GM10248 (cell line): ENCODE measurements at regions of chr14 and their contacts with region 1.

Region 1: GRCh38 chr14:95774265-95775160 is 60.6 kb upstream of the TCL1A start:
- DNase-seq: peak; percentile 77
- CTCF ChIP-seq: peak; percentile 84

Region 2: GRCh38 chr14:93892923-93893558 is 1881.5 kb before region 1 on chr14:
- CTCF ChIA-PET with region 1: no interaction called
- POLR2A ChIA-PET with region 1: no interaction called
- DNase-seq: peak; percentile 81
- CTCF ChIP-seq: peak; percentile 91

Region 3: DNA sequence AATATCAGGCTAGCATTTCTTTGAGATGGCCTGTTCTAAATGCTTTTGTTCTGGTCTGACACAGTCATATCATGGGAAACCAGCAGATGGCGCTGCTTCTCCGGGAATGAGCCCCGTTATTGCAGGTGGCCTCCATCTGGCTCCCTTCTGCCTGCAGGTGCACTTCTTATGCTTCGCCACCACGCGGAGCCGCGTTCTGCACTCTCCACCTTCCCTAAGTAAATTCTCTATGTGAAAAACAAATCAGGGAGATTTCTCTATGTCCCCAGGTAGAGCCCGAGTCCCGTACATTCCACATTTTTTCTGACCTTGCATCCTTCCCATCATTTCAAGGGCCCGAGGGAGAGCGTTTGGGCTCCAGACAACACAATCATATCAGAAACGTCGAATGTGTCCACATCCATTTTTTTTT is 213.5 kb before region 1 on chr14:
- CTCF ChIA-PET with region 1: interaction called, 117 read pairs
- POLR2A ChIA-PET with region 1: no interaction called
- DNase-seq: peak; percentile 89
- CTCF ChIP-seq: peak; percentile 90

Region 4: DNA sequence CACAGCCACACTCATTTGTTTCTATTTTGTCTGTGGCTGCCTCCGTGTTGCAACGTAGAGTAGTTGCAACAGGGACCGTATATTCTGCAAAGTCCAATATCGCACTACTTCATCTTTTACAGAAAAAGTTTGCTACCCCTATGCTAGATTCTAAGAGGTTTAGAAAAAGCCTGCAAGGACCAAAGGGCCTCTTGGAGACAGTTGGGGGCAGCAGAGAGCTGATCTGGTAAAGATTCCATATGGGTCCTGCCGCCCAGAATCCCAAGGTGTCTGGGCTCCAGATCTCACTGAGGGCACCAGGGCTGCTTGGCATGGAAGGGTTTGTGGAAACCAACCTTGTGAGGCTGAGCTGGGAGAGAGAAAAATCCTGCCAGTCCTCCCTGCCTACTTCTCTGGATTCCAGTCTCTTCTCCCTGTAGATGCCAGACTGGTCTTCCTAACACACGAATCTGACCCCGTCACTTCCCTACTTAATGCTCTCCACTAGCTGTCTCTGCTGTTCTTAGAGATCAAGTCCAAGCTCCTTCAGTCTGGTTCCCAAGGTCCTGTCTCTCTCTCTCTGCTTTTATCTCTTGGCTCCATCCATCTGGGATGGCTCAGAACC is 165.0 kb before region 1 on chr14:
- CTCF ChIA-PET with region 1: interaction called, 27 read pairs
- POLR2A ChIA-PET with region 1: no interaction called
- DNase-seq: peak; percentile 46
- CTCF ChIP-seq: peak; percentile 71

Region 5: GRCh38 chr14:95713596-95714371 is 60.7 kb before region 1 on chr14 and contains the start of gene TCL1A:
- CTCF ChIA-PET with region 1: interaction called, 11 read pairs
- POLR2A ChIA-PET with region 1: no interaction called
- DNase-seq: peak; percentile 91
- CTCF ChIP-seq: peak; percentile 66

Region 6: GRCh38 chr14:95725685-95726336 is 48.7 kb before region 1 on chr14:
- CTCF ChIA-PET with region 1: interaction called, 34 read pairs
- POLR2A ChIA-PET with region 1: no interaction called
- DNase-seq: peak; percentile 73
- CTCF ChIP-seq: no peak

Region 7: DNA sequence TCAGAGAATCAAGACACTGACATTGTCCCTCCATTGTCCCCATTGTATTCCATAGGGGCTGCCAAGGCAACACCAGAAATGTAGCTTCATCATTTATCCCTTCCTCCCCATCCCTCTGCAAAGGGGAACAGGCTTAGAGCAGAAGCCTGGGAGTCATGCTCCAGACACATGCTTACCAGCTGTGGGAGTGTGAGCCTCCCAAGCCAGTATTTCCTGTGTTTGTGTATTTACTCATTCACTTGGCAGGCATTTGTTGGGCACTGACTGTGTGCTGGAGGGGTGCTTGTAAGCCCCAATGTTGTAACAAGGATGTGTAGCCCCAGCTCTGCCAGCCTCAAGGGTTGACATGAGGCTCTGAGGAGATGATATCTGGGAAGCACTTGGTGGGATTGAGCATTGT is 14.6 kb before region 1 on chr14:
- CTCF ChIA-PET with region 1: interaction called, 43 read pairs
- POLR2A ChIA-PET with region 1: no interaction called
- DNase-seq: no peak
- CTCF ChIP-seq: no peak

Region 8: GRCh38 chr14:95786566-95786965 is 12.1 kb after region 1 on chr14:
- CTCF ChIA-PET with region 1: interaction called, 14 read pairs
- POLR2A ChIA-PET with region 1: no interaction called
- DNase-seq: no peak
- CTCF ChIP-seq: no peak